Heart left ventricle (tissue), 16 donors: ENCODE measurements at regions of chr3 and their contacts with region 1.

Region 1: GRCh38 chr3:32340039-32340438 is 51.6 kb upstream of the CMTM7 start:
- DNase-seq: no peak
- ATAC-seq: peak; percentile 55 to 90 (median 84)
- H3K4me3 ChIP-seq: no peak overlapping the region
- H3K27ac ChIP-seq: no peak overlapping the region
- H3K4me1 ChIP-seq: peaks cover 0 to 14% (median 0%) of the 10 kb centered on the region in 12 donors
- H3K27me3 ChIP-seq: no peaks in the 10 kb centered on the region
- CTCF ChIP-seq: peak in 11 of 12 donors; percentile 34 to 67 (median 54)
- POLR2A ChIP-seq: no peak

Region 2: GRCh38 chr3:32018757-32019564 is 321.1 kb before region 1 on chr3:
- intact Hi-C with region 1: loop called in 1 of 10 experiments (anchors 10 kb)
- DNase-seq: no peak
- ATAC-seq: peak; percentile 15 to 89 (median 79)
- H3K4me3 ChIP-seq: no peak overlapping the region
- H3K27ac ChIP-seq: no peak overlapping the region
- H3K4me1 ChIP-seq: peaks cover 0 to 2% (median 0%) of the 10 kb centered on the region in 12 donors
- H3K27me3 ChIP-seq: no peaks in the 10 kb centered on the region
- CTCF ChIP-seq: peak; percentile 64 to 82 (median 75)
- POLR2A ChIP-seq: no peak